Caco-2 (cell line): ENCODE measurements at regions of chrX and their contacts with region 1.

Region 1: GRCh38 chrX:119067023-119067739 is 5.6 kb upstream of the CT47C1 start:
- DNase-seq: peak; percentile 35 to 52
- H3K4me3 ChIP-seq: no peak overlapping the region
- H3K4me3 Mint-ChIP-seq: no peak overlapping the region
- H3K27ac Mint-ChIP-seq: no peak overlapping the region
- H3K4me1 ChIP-seq: no peaks in the 10 kb centered on the region
- H3K4me1 Mint-ChIP-seq: no peaks in the 10 kb centered on the region
- H3K27me3 ChIP-seq: no peaks in the 10 kb centered on the region
- H3K27me3 Mint-ChIP-seq: peaks cover 2% of the 10 kb centered on the region
- CTCF ChIP-seq: peak; percentile 44 to 67

Region 2: DNA sequence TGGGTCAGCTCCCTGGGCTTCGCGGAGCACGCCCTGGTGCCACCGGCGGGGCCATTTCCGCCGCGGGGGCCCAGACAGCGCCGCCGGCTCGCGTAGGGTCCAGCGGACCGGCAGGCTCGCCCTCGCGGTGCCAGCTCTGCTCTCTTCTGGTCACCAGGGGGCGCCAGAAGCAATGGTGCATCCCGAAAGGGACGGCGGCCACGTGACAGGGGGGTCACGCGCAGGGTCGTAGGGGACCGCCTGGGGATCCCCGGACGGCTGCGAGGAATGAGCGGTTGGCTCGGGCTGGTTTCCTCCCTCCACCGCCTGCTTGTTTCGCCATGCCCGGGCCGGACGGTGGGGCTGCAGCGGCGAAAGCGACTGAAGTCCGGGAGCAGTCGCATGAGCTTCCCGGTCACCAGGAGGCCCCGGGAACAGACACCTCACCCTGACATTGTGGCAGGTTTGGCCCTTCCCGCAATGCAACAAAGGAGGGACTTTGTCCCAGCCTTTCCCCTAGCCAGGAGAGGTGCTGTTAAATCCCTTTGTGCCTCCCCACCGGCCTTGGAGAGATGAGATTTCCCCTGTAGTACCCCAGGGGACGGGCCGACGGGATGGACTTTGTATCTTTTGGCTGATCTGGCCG is 227.7 kb before region 1 on chrX:
- CTCF ChIA-PET with region 1: interaction called, 11 read pairs
- POLR2A ChIA-PET with region 1: no interaction called
- intact Hi-C with region 1: no loop called
- DNase-seq: peak; percentile 78 to 85
- H3K4me3 ChIP-seq: peak overlapping the region; percentile 48
- H3K4me3 Mint-ChIP-seq: peak overlapping the region; percentile 70
- H3K27ac Mint-ChIP-seq: no peak overlapping the region
- H3K4me1 ChIP-seq: no peaks in the 10 kb centered on the region
- H3K4me1 Mint-ChIP-seq: no peaks in the 10 kb centered on the region
- H3K27me3 ChIP-seq: no peaks in the 10 kb centered on the region
- H3K27me3 Mint-ChIP-seq: no peaks in the 10 kb centered on the region
- CTCF ChIP-seq: peak; percentile 56 to 62

Region 3: GRCh38 chrX:118847676-118848075 is 219.5 kb before region 1 on chrX:
- CTCF ChIA-PET with region 1: interaction called, 3 read pairs
- POLR2A ChIA-PET with region 1: no interaction called
- intact Hi-C with region 1: loop called (anchors 1 kb)
- DNase-seq: peak in 1 of 2 experiments; percentile 43
- H3K4me3 ChIP-seq: no peak overlapping the region
- H3K4me3 Mint-ChIP-seq: no peak overlapping the region
- H3K27ac Mint-ChIP-seq: no peak overlapping the region
- H3K4me1 ChIP-seq: no peaks in the 10 kb centered on the region
- H3K4me1 Mint-ChIP-seq: no peaks in the 10 kb centered on the region
- H3K27me3 ChIP-seq: no peaks in the 10 kb centered on the region
- H3K27me3 Mint-ChIP-seq: peaks cover 2% of the 10 kb centered on the region
- CTCF ChIP-seq: peak; percentile 34 to 49